ENCODE measurements at regions of chr17 and their contacts with region 1.

Region 1: DNA sequence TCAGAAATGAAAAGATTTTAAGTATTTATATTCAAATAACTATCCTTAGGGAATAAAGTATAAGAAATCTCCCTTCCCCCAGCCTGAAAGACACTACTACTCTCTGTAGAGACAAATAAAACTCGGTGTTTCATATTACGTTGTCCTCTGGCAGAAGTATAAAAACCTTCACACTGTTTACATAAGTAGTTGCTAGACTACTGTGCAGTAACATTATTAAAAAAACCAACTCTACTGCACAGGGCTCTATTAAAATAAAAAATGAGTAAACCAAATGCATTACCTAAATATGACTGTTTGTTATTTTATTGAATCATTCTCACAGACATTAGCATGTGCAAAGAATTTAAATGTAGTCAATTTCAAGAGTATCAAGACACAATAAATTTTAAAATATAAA is 67.4 kb downstream of the MED13 start:
- DNase-seq: no peak
- ATAC-seq: peak; percentile 75 to 97 (median 89)
- H3K4me3 ChIP-seq: no peak overlapping the region
- H3K27ac ChIP-seq: peak overlapping the region in 5 of 10 donors; percentile 3 to 30 (median 14)
- H3K4me1 ChIP-seq: peaks cover 0 to 34% (median 24%) of the 10 kb centered on the region in 9 donors
- H3K27me3 ChIP-seq: no peaks in the 10 kb centered on the region
- CTCF ChIP-seq: no peak

Region 2: DNA sequence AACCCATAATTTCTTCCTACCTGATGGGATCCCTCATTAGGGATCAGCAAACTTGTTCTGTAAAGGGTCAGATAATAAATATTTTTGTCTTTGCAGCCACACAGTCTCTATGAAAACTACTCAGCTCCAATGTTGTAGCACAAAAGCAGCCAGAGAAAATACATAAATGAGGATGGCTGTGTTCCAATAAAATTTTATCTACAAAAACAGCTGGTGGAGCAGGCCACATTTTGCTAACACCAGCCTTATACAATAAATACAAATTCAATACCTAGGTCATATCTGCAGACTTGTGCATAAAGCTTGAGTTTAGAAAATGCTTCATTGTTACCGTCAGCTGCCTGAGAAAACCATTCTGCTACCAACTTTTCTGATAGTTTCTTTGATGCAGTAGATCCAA is 31.5 kb before region 1 on chr17:
- intact Hi-C with region 1: no loop called
- DNase-seq: no peak
- ATAC-seq: no peak
- H3K4me3 ChIP-seq: no peak overlapping the region
- H3K27ac ChIP-seq: no peak overlapping the region
- H3K4me1 ChIP-seq: peaks cover 0 to 12% (median 0%) of the 10 kb centered on the region in 9 donors
- H3K27me3 ChIP-seq: no peaks in the 10 kb centered on the region
- CTCF ChIP-seq: no peak

Region 3: DNA sequence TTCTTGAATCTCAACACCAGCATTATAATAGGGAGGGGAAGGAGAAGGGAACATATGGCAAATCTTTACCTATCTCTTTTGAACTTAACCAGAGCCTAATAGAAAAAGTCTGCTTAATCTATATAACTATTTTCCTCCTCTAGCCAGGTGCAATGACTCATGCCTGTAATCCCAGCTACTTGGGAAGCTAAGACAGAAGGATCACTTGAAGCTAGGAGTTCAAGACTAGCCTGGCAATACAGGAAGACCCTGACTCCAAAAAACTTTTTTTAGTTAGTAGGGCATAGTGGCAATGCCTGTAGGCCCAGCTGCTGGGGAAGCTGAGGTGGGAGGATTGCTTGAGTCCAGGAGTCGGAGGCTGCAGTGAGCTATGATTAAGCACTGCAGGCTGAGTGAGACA is 58.7 kb after region 1 on chr17:
- intact Hi-C with region 1: loop called in 2 of 10 experiments (anchors 5 to 10 kb)
- DNase-seq: no peak
- ATAC-seq: no peak
- H3K4me3 ChIP-seq: no peak overlapping the region
- H3K27ac ChIP-seq: no peak overlapping the region
- H3K4me1 ChIP-seq: peaks cover 3 to 89% (median 60%) of the 10 kb centered on the region in 9 donors
- H3K27me3 ChIP-seq: no peaks in the 10 kb centered on the region
- CTCF ChIP-seq: no peak

Region 4: DNA sequence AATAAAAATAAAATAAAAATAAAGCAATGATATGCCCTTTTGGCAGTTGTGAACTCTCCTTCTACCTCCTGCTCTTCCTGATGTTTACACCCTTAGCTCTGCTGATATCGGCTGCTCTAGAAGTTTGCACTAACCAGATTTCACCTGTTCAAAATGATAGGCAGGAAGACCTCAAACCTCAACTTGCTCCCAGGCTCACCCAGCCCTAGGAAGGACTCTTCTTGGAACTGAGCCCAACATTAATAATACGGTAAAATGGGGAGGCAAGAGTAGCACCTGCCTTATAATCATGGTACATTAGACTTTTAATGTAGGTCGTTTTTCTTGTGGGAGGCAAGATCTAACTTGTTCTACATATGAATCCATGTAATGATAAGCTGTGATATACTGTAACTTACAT is 128.6 kb after region 1 on chr17:
- intact Hi-C with region 1: no loop called
- DNase-seq: no peak
- ATAC-seq: no peak
- H3K4me3 ChIP-seq: no peak overlapping the region
- H3K27ac ChIP-seq: no peak overlapping the region
- H3K4me1 ChIP-seq: no peaks in the 10 kb centered on the region
- H3K27me3 ChIP-seq: peaks cover 0 to 20% (median 4%) of the 10 kb centered on the region in 7 donors
- CTCF ChIP-seq: no peak

Measured in heart right ventricle (tissue), 16 donors.